Posterior cingulate gyrus (tissue), 11 donors: ENCODE measurements at regions of chr20 and their contacts with region 1.

Region 1: DNA sequence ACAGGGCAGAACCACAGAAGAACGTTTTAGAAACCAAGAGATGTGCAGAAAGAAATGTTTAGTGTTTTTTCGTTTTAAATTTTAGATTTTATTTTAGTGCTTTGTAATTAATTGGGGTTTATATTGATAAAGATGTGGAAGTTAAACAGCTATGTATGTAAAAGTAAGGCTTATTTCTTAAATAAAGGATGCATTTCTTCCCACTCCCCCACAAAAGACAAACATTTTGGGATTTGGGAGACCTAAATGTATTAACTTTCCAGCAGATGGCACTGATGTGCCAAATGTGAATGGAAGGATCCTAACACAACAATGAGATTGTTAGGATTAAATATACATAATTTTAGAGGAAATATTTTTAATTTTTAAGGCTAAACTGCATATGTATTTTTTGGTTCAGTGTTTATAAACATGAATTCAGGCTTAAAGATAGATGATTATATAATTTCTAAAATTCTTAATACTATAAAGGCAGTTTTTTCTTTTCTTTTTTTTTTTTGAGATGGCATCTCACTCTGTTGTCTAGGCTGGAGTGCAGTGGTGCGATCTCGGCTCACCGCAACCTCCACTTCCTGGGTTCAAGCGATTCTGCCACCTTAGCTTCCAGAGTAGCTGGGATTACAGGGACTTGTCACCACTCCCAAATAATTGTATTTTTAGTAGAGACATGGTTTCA is 12.0 kb downstream of the PFDN4 start:
- DNase-seq: no peak

Region 2: GRCh38 chr20:54645451-54646155 is 425.7 kb after region 1 on chr20:
- intact Hi-C with region 1: loop called (anchors 2 kb)
- DNase-seq: no peak